Activated naive CD4-positive, alpha-beta T cell treated with anti-CD3 and anti-CD28 coated beads, Interleukin-2, amount 10 ng/mL, durations not matched to agents 7 days and 5 days (primary cell): ENCODE measurements at regions of chr7 and their contacts with region 1.

Region 1: GRCh38 chr7:132557489-132558044 is 18.7 kb downstream of the PLXNA4 start:
- DNase-seq: no peak
- H3K4me3 Mint-ChIP-seq: no peak overlapping the region
- H3K27ac Mint-ChIP-seq: no peak overlapping the region
- H3K4me1 Mint-ChIP-seq: peaks cover 37% of the 10 kb centered on the region
- H3K27me3 Mint-ChIP-seq: peaks cover 43% of the 10 kb centered on the region

Region 2: GRCh38 chr7:132318352-132319318 is 238.9 kb before region 1 on chr7:
- CTCF ChIA-PET with region 1: interaction called, 15 read pairs
- DNase-seq: peak; percentile 88
- H3K4me3 Mint-ChIP-seq: peak overlapping the region; percentile 4
- H3K27ac Mint-ChIP-seq: no peak overlapping the region
- H3K4me1 Mint-ChIP-seq: peaks cover 50% of the 10 kb centered on the region
- H3K27me3 Mint-ChIP-seq: peaks cover 69% of the 10 kb centered on the region

Region 3: DNA sequence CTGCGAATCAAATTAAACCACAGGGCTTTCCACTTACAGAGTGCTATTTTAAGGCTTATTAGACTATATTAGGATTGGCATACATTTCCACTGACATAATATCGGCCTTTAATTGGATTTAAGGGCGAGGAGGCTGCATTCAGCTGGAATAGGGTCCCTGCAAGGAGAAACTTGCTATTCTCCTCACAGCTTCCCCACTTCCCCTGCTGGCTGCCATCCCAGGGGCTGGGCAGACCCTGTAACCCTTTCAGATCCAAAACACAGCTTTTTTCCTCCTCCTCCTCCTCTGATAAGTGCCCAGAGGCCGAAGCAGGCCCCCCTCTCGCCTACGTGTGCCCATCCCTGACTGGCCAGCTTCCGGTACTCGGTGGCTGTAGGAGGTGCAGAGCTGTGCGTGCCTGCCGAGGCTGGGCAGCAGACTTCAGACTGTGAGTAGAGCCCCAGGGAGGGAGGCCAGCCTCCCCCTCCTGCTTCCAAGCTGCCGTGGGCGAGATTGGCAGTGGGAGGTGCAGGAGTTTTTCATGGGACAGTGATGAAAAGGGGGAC is 205.5 kb before region 1 on chr7:
- CTCF ChIA-PET with region 1: no interaction called
- DNase-seq: no peak
- H3K4me3 Mint-ChIP-seq: no peak overlapping the region
- H3K27ac Mint-ChIP-seq: no peak overlapping the region
- H3K4me1 Mint-ChIP-seq: no peaks in the 10 kb centered on the region
- H3K27me3 Mint-ChIP-seq: peaks cover 71% of the 10 kb centered on the region

Region 4: DNA sequence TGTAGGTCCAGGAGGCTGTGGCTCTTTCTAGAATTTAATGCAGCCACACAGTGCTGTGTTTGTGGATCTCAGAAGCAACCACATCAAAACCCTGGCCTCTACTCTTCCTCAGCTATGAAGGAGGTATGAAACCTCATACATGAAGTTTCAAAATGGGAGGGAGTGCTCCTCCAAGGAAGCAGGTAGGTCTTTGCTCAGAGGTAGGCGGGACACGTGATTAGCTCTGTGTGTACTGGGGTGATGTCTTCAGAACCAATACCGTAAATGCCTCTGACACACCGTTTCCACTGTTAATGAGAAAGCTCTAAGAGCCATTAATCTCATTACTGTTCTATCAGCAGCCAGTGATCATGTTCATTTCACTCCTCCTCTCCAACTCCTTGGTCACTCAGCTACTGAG is 107.4 kb before region 1 on chr7:
- CTCF ChIA-PET with region 1: interaction called, 13 read pairs
- DNase-seq: peak; percentile 39
- H3K4me3 Mint-ChIP-seq: no peak overlapping the region
- H3K27ac Mint-ChIP-seq: peak overlapping the region; percentile 58
- H3K4me1 Mint-ChIP-seq: peaks cover 96% of the 10 kb centered on the region
- H3K27me3 Mint-ChIP-seq: peaks cover 11% of the 10 kb centered on the region

Region 5: DNA sequence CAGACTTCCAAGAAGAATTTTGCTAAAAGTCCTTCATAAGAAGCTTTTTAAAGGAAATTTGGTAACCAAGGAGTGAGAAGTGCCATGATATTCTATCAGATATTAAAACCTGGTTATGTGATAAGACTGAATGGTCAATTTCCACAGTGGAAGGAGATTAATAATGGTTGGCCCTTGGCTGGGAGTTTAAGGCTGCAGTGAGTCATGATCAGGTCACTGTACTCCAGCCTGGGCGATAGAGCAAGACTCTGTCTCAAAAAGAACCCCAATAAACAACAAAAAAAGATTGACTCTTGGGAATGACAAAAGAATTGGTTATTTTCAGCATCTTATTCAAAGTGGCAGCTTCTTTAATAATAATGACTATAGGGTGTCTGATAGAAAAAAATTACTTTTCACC is 732.5 kb after region 1 on chr7:
- CTCF ChIA-PET with region 1: no interaction called
- DNase-seq: no peak
- H3K4me3 Mint-ChIP-seq: no peak overlapping the region
- H3K27ac Mint-ChIP-seq: no peak overlapping the region
- H3K4me1 Mint-ChIP-seq: no peaks in the 10 kb centered on the region
- H3K27me3 Mint-ChIP-seq: no peaks in the 10 kb centered on the region